ENCODE measurements at regions of chr12 and their contacts with region 1.

Region 1: GRCh38 chr12:56189176-56189917 is at the start of gene SMARCC2:
- DNase-seq: peak; percentile 85
- H3K4me3 Mint-ChIP-seq: peak within 1 kb of the TSS; percentile 97
- H3K27ac Mint-ChIP-seq: peak within 1 kb of the TSS; percentile 94
- H3K4me1 Mint-ChIP-seq: peaks cover 53% of the 10 kb centered on the region
- H3K27me3 Mint-ChIP-seq: no peaks in the 10 kb centered on the region
- total RNA-seq, gene SMARCC2: 133 to 137 TPM

Region 2: DNA sequence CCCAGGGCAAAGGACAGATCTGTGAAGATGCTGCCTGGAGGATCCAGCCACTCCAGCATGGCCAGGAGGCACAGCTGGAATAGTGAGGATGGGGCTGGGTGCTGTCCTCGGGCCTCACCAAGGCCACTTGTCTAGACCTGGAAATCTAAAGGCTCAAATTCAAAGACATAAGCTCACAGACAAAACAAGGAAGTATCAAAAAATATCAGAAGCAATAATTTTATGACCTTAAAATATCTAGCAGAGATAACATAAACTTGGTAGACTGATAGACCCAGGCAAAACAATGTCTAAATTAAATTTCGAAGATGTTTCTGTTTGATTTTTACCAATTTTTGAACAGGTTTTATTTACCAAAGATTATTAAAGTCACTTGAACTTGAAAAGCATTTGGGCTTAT is 324.0 kb before region 1 on chr12:
- CTCF ChIA-PET with region 1: no interaction called
- POLR2A ChIA-PET with region 1: no interaction called
- DNase-seq: no peak
- H3K4me3 Mint-ChIP-seq: no peak overlapping the region
- H3K27ac Mint-ChIP-seq: no peak overlapping the region
- H3K4me1 Mint-ChIP-seq: no peaks in the 10 kb centered on the region
- H3K27me3 Mint-ChIP-seq: no peaks in the 10 kb centered on the region

Region 3: DNA sequence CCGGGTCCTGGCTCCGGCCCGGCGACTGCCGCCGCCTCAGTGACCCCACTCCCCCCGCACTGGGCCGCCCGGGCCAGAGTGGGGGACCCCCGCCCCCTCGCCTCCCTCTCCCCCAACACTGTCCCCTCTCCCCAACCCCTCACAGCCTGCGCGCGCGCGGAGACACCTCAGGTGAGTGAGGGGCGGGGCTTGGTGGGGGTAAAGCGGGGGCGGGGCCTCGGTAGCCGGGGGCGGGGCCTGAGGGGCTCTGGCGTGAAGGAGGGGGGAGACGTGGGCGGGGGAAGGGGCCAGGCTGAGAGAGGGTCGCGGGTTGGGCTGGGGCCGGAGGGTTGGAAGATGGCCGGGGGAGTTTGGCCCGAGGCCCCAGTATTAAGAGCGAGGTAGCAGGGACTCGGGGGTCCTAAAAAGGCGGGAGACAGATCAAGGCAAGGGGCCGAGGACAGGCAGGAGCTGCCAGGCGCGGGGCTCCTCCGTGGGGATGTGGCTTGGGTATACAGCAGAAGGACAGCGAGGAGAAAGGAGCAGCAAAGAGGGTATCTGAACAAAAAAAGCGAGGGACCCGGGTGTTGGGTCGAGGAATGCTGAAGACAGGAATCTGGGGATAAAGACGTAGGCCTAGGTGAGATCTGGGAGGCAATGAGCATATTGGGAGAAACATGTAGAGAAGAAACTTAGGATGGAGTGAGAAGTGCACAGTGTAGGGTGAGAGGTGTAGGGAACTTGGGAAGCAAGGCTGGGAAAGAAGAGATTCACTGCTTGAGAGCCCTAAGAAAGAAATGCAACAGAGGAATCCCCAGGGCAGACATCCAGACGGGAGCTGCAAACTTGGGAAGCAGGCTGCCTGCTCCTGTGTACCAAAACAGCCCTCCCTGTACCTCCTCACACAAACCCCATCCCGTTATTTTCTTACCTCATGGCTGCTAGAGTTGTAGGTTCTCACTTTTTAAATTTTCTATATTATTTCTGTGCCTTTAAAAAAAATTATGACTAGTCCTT is 181.5 kb before region 1 on chr12:
- CTCF ChIA-PET with region 1: no interaction called
- POLR2A ChIA-PET with region 1: no interaction called
- DNase-seq: peak; percentile 73
- H3K4me3 Mint-ChIP-seq: peak overlapping the region; percentile 86
- H3K27ac Mint-ChIP-seq: peak overlapping the region; percentile 74
- H3K4me1 Mint-ChIP-seq: peaks cover 29% of the 10 kb centered on the region
- H3K27me3 Mint-ChIP-seq: no peaks in the 10 kb centered on the region

Region 4: GRCh38 chr12:56117778-56118687 is 71.3 kb before region 1 on chr12 and contains the start of gene ZC3H10:
- CTCF ChIA-PET with region 1: interaction called, 271 read pairs
- POLR2A ChIA-PET with region 1: interaction called, 114 read pairs
- DNase-seq: peak; percentile 99
- H3K4me3 Mint-ChIP-seq: peak within 1 kb of the TSS; percentile 99
- H3K27ac Mint-ChIP-seq: peak within 1 kb of the TSS; percentile 99
- H3K4me1 Mint-ChIP-seq: peaks cover 40% of the 10 kb centered on the region
- H3K27me3 Mint-ChIP-seq: no peaks in the 10 kb centered on the region
- total RNA-seq, gene ZC3H10: 8.0 to 10.3 TPM

Region 5: GRCh38 chr12:56152318-56153033 is 36.9 kb before region 1 on chr12 and contains the start of gene MYL6B:
- CTCF ChIA-PET with region 1: interaction called, 11 read pairs
- POLR2A ChIA-PET with region 1: interaction called, 25 read pairs
- DNase-seq: peak; percentile 97
- H3K4me3 Mint-ChIP-seq: peak within 1 kb of the TSS; percentile 94
- H3K27ac Mint-ChIP-seq: peak within 1 kb of the TSS; percentile 100
- H3K4me1 Mint-ChIP-seq: peaks cover 54% of the 10 kb centered on the region
- H3K27me3 Mint-ChIP-seq: no peaks in the 10 kb centered on the region
- total RNA-seq, gene MYL6B: 60.4 to 63.2 TPM

Region 6: GRCh38 chr12:56172831-56173230 is 16.5 kb before region 1 on chr12:
- CTCF ChIA-PET with region 1: interaction called, 21 read pairs
- POLR2A ChIA-PET with region 1: interaction called, 25 read pairs
- DNase-seq: no peak
- H3K4me3 Mint-ChIP-seq: no peak overlapping the region
- H3K27ac Mint-ChIP-seq: peak overlapping the region; percentile 26
- H3K4me1 Mint-ChIP-seq: peaks cover 7% of the 10 kb centered on the region
- H3K27me3 Mint-ChIP-seq: no peaks in the 10 kb centered on the region

Region 7: GRCh38 chr12:56224102-56224701 is 34.9 kb after region 1 on chr12 and contains the start of gene NABP2:
- CTCF ChIA-PET with region 1: interaction called, 35 read pairs
- POLR2A ChIA-PET with region 1: interaction called, 29 read pairs
- DNase-seq: peak; percentile 95
- H3K4me3 Mint-ChIP-seq: peak within 1 kb of the TSS; percentile 89
- H3K27ac Mint-ChIP-seq: peak within 1 kb of the TSS; percentile 76
- H3K4me1 Mint-ChIP-seq: peaks cover 53% of the 10 kb centered on the region
- H3K27me3 Mint-ChIP-seq: no peaks in the 10 kb centered on the region
- total RNA-seq, gene NABP2: 49.6 to 52.3 TPM

Region 8: GRCh38 chr12:56468216-56469006 is 279.1 kb after region 1 on chr12 and contains the start of gene SPRYD4:
- CTCF ChIA-PET with region 1: interaction called, 16 read pairs
- POLR2A ChIA-PET with region 1: interaction called, 7 read pairs
- DNase-seq: peak; percentile 96
- H3K4me3 Mint-ChIP-seq: peak within 1 kb of the TSS; percentile 94
- H3K27ac Mint-ChIP-seq: peak within 1 kb of the TSS; percentile 94
- H3K4me1 Mint-ChIP-seq: peaks cover 29% of the 10 kb centered on the region
- H3K27me3 Mint-ChIP-seq: no peaks in the 10 kb centered on the region
- total RNA-seq, gene SPRYD4: 2.9 to 3.1 TPM

Measured in activated CD4-positive, alpha-beta memory T cell treated with anti-CD3 and anti-CD28 coated beads, Interleukin-2, amount 10 ng/mL, durations not matched to agents 7 days and 5 days (primary cell).